ENCODE measurements at regions of chr6 and their contacts with region 1.

Region 1: DNA sequence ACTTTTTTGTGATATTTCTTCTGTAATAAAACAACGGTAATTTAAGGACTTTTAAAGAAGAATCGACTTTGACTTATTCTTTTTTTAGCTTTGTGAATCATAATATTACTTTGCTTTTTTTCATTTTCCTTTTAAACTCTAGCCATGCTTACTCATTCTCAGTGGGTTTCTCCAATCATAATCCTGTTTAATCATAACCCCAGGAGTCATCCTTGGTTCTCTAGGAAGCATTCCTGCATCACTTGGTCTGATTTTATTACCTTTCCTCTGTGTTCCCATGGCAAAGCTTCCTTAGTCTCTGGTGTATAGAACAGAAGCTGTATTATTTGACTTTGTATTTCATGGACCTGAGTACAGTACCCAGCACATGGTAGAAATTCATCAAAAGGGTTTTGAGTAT is 223.5 kb downstream of the CDKAL1 start:
- DNase-seq: peak; percentile 80
- H3K4me3 ChIP-seq: no peak overlapping the region
- H3K27ac ChIP-seq: peak overlapping the region; percentile 87
- H3K4me1 ChIP-seq: peaks cover 38% of the 10 kb centered on the region
- H3K27me3 ChIP-seq: no peaks in the 10 kb centered on the region
- CTCF ChIP-seq: no peak

Region 2: DNA sequence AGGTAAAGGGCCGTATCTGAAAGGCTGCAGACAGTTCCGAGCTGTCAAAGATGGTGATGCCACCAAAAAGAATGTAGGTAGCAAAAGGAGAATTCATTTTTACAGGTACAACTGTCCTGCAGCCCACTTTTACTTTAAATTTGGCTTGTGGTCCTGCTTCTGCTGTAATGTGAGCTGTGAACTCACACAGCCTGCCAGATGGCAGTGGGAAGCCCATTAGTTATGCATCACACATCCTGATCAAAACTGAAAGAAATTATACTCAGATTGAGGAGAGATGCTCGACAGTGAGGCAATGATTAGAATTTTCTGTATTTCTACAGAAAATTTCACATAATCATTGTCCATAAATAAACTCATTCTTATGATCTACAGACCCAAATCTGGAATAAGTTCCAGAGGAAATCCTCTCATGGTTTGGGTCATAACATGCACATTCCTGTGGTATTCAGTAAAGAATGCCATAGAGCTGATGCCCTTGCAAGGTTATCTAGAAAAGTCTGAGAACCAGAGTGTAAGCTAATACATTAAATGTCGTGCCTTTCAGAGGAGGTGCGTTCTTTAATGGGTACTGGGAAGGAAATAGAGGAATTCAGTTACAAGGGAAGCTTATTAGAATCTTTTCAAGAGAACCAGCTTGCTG is 380.0 kb before region 1 on chr6:
- CTCF ChIA-PET with region 1: no interaction called
- POLR2A ChIA-PET with region 1: no interaction called
- intact Hi-C with region 1: no loop called
- DNase-seq: peak; percentile 37
- H3K4me3 ChIP-seq: no peak overlapping the region
- H3K27ac ChIP-seq: no peak overlapping the region
- H3K4me1 ChIP-seq: no peaks in the 10 kb centered on the region
- H3K27me3 ChIP-seq: no peaks in the 10 kb centered on the region
- CTCF ChIP-seq: no peak

Region 3: DNA sequence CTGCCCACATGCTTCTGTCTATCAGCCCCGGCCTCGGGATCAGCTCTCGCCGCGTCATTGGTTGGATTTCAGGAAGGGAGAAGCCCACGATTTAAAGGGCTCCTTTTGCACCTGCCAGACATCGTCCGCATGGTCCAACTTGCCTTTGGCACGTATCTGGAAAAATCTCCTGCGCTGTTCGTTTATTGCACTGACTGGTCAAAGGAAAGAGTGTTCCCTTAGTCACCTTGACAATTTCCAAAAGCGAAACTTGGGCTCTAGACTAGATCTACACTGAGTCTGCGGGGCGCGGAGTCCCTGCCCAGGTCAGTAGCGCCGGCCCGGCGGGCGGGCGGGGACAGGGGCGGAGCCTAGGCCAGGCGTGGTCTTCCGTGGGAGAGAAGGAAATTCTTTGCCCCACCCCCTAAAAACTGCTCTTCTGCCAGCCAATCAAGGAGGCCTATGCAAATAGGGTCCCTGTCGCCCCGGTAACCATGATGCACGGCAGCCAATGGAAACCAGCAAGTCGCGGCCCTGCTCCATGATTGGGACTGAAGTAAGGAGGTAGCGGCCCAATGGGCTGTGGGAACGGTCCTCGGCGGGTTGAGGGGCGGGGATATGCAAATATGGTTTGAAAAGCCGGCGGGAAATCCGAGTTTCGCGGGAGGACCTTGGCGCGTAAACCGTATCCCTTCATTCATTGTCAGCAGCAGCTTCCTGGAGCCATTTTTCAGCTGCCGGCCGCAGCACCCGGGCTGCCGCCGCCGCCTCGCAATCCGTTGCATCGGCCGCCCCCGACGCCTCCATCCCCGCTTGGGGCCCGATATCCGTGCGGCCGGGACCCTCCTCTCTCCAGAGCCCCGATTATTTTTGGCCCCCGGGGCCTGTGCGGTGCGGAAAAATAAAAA is 356.3 kb before region 1 on chr6 and contains the start of gene E2F3:
- CTCF ChIA-PET with region 1: no interaction called
- POLR2A ChIA-PET with region 1: no interaction called
- intact Hi-C with region 1: loop called (anchors 10 kb)
- DNase-seq: peak; percentile 100
- H3K4me3 ChIP-seq: peak within 1 kb of the TSS; percentile 96
- H3K27ac ChIP-seq: peak within 1 kb of the TSS; percentile 96
- H3K4me1 ChIP-seq: no peaks in the 10 kb centered on the region
- H3K27me3 ChIP-seq: peaks cover 1% of the 10 kb centered on the region
- CTCF ChIP-seq: no peak
- total RNA-seq, gene E2F3: 41.3 and 42.4 TPM in 2 replicates

Region 4: GRCh38 chr6:20564269-20564668 is 193.5 kb before region 1 on chr6:
- CTCF ChIA-PET with region 1: no interaction called
- POLR2A ChIA-PET with region 1: no interaction called
- intact Hi-C with region 1: loop called (anchors 1 kb)
- DNase-seq: peak; percentile 63
- H3K4me3 ChIP-seq: peak overlapping the region; percentile 12
- H3K27ac ChIP-seq: peak overlapping the region; percentile 52
- H3K4me1 ChIP-seq: peaks cover 48% of the 10 kb centered on the region
- H3K27me3 ChIP-seq: no peaks in the 10 kb centered on the region
- CTCF ChIP-seq: peak; percentile 71

Region 5: GRCh38 chr6:20778459-20778858 is 20.7 kb after region 1 on chr6:
- CTCF ChIA-PET with region 1: no interaction called
- POLR2A ChIA-PET with region 1: no interaction called
- intact Hi-C with region 1: no loop called
- DNase-seq: no peak
- H3K4me3 ChIP-seq: no peak overlapping the region
- H3K27ac ChIP-seq: no peak overlapping the region
- H3K4me1 ChIP-seq: peaks cover 23% of the 10 kb centered on the region
- H3K27me3 ChIP-seq: no peaks in the 10 kb centered on the region
- CTCF ChIP-seq: no peak

Region 6: DNA sequence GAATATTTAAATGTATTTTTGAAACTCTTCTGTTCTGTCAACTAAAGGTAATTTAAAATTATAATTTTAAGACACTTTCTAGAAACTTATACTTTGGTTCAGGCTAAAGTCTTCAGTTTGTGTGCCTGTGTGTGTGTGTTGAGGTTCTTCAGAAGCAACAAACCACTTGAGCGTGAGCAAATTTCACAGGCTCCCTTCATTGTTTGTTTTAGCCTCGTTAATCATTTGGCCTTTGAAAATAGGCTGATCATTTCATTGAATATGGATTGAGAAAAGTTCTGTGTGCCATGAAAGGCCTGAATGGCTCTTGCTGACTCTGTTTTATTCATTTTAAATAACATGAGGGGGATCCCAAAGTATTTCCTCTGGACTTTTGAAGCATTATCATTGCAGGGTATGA is 196.6 kb after region 1 on chr6:
- CTCF ChIA-PET with region 1: no interaction called
- POLR2A ChIA-PET with region 1: no interaction called
- intact Hi-C with region 1: no loop called
- DNase-seq: no peak
- H3K4me3 ChIP-seq: no peak overlapping the region
- H3K27ac ChIP-seq: no peak overlapping the region
- H3K4me1 ChIP-seq: peaks cover 46% of the 10 kb centered on the region
- H3K27me3 ChIP-seq: no peaks in the 10 kb centered on the region
- CTCF ChIP-seq: no peak

Region 7: GRCh38 chr6:21188505-21189223 is 430.9 kb after region 1 on chr6:
- CTCF ChIA-PET with region 1: no interaction called
- POLR2A ChIA-PET with region 1: interaction called, 5 read pairs
- intact Hi-C with region 1: loop called (anchors 10 kb)
- DNase-seq: peak; percentile 96
- H3K4me3 ChIP-seq: no peak overlapping the region
- H3K27ac ChIP-seq: peak overlapping the region; percentile 86
- H3K4me1 ChIP-seq: peaks cover 76% of the 10 kb centered on the region
- H3K27me3 ChIP-seq: no peaks in the 10 kb centered on the region
- CTCF ChIP-seq: no peak